ENCODE measurements at regions of chr14 and their contacts with region 1.

Region 1: GRCh38 chr14:45134051-45134958 is at the start of gene FKBP3:
- DNase-seq: peak; percentile 80 to 99 (median 94)
- ATAC-seq: peak; percentile 97
- H3K4me3 ChIP-seq: peak within 1 kb of the TSS; percentile 97
- H3K4me3 Mint-ChIP-seq: peak within 1 kb of the TSS; percentile 93 to 99 (median 96)
- H3K27ac ChIP-seq: peak within 1 kb of the TSS; percentile 89
- H3K27ac Mint-ChIP-seq: peak within 1 kb of the TSS; percentile 95 to 99 (median 98)
- H3K4me1 ChIP-seq: peaks cover 11 to 19% of the 10 kb centered on the region in 2 donors
- H3K4me1 Mint-ChIP-seq: peaks cover 21 to 70% (median 50%) of the 10 kb centered on the region in 7 donors
- H3K27me3 ChIP-seq: no peaks in the 10 kb centered on the region
- H3K27me3 Mint-ChIP-seq: no peaks in the 10 kb centered on the region
- total RNA-seq, gene FKBP3: 31.7 to 66.2 (median 55.4) TPM

Region 2: DNA sequence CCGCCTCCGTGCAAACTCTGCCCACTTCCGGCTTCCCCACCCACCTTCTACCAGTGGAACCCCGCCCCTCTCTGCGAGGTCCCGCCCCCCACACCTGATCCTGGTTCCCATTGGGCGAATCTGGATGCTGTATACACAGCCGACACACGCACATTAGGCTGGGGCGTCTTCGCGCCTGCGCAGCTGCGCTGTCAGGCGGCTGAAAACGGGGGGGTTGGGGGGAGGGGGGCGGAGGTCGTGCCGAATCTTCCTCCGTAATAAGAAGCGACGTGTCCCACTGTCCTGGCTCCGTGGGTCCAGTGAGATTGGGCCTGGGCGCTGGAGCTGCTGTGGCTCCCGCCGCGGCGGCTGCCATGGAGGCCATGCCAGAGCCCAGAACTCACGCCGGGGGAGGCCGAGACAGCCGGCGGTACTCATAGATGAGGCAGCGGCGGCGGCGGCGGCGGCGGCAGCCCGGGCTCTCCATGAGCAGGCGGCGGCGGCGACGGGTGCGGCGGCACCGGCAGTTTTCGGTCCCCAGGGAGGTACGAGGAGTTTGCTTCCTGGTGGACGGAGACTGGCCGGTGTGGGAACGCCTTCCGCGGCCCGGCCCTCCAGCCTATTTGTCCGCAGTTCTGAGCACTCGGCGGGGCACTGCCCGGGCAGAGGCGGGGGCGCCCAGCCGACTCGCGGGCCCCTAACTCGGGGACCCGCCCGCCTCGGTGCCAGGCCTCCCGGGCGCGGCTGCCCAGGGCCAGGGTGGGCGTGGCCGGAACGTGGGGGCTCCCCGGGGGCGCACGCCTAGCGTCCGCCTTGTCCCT is 237.1 kb before region 1 on chr14:
- CTCF ChIA-PET with region 1: no interaction called
- POLR2A ChIA-PET with region 1: interaction called, 14 read pairs
- intact Hi-C with region 1: loop called (anchors 1 kb)
- DNase-seq: peak; percentile 80 to 98 (median 90)
- ATAC-seq: peak; percentile 99
- H3K4me3 ChIP-seq: peak overlapping the region; percentile 68
- H3K4me3 Mint-ChIP-seq: peak overlapping the region; percentile 80 to 97 (median 94)
- H3K27ac ChIP-seq: peak overlapping the region; percentile 86
- H3K27ac Mint-ChIP-seq: peak overlapping the region; percentile 83 to 98 (median 98)
- H3K4me1 ChIP-seq: peaks cover 13 to 17% of the 10 kb centered on the region in 2 donors
- H3K4me1 Mint-ChIP-seq: peaks cover 6 to 40% (median 27%) of the 10 kb centered on the region in 7 donors
- H3K27me3 ChIP-seq: no peaks in the 10 kb centered on the region
- H3K27me3 Mint-ChIP-seq: no peaks in the 10 kb centered on the region

Region 3: GRCh38 chr14:44912041-44912869 is 222.1 kb before region 1 on chr14:
- CTCF ChIA-PET with region 1: interaction called, 3 read pairs
- POLR2A ChIA-PET with region 1: interaction called, 3 read pairs
- intact Hi-C with region 1: loop called (anchors 1 to 5 kb)
- DNase-seq: peak in 1 of 9 donors; percentile 10
- ATAC-seq: no peak
- H3K4me3 ChIP-seq: no peak overlapping the region
- H3K4me3 Mint-ChIP-seq: peak overlapping the region in 9 of 10 donors; percentile 26 to 72 (median 52)
- H3K27ac ChIP-seq: no peak overlapping the region
- H3K27ac Mint-ChIP-seq: no peak overlapping the region
- H3K4me1 ChIP-seq: no peaks in the 10 kb centered on the region
- H3K4me1 Mint-ChIP-seq: peaks cover 0 to 16% (median 12%) of the 10 kb centered on the region in 7 donors
- H3K27me3 ChIP-seq: peaks cover 9 to 16% of the 10 kb centered on the region in 2 donors
- H3K27me3 Mint-ChIP-seq: peaks cover 31 to 42% (median 38%) of the 10 kb centered on the region in 5 donors

Region 4: GRCh38 chr14:45083971-45084722 is 50.2 kb before region 1 on chr14 and contains the start of gene PRPF39:
- CTCF ChIA-PET with region 1: no interaction called
- POLR2A ChIA-PET with region 1: interaction called, 11 read pairs
- intact Hi-C with region 1: loop called (anchors 1 kb)
- DNase-seq: peak; percentile 89 to 97 (median 92)
- ATAC-seq: peak; percentile 97
- H3K4me3 ChIP-seq: peak within 1 kb of the TSS; percentile 86
- H3K4me3 Mint-ChIP-seq: peak within 1 kb of the TSS; percentile 94 to 97 (median 96)
- H3K27ac ChIP-seq: peak within 1 kb of the TSS; percentile 84
- H3K27ac Mint-ChIP-seq: peak within 1 kb of the TSS; percentile 89 to 98 (median 93)
- H3K4me1 ChIP-seq: peaks cover 21 to 40% of the 10 kb centered on the region in 2 donors
- H3K4me1 Mint-ChIP-seq: peaks cover 35 to 63% (median 50%) of the 10 kb centered on the region in 7 donors
- H3K27me3 ChIP-seq: no peaks in the 10 kb centered on the region
- H3K27me3 Mint-ChIP-seq: no peaks in the 10 kb centered on the region
- total RNA-seq, gene PRPF39: 46.2 to 81.8 (median 58.4) TPM

Region 5: GRCh38 chr14:45120096-45120495 is 14.2 kb before region 1 on chr14:
- CTCF ChIA-PET with region 1: interaction called, 3 read pairs
- POLR2A ChIA-PET with region 1: interaction called, 3 read pairs
- intact Hi-C with region 1: loop called in 1 of 2 experiments (anchors 1 kb)
- DNase-seq: no peak
- ATAC-seq: no peak
- H3K4me3 ChIP-seq: no peak overlapping the region
- H3K4me3 Mint-ChIP-seq: no peak overlapping the region
- H3K27ac ChIP-seq: no peak overlapping the region
- H3K27ac Mint-ChIP-seq: peak overlapping the region in 5 of 9 donors; percentile 2 to 69 (median 9)
- H3K4me1 ChIP-seq: no peaks in the 10 kb centered on the region
- H3K4me1 Mint-ChIP-seq: peaks cover 0 to 4% (median 0%) of the 10 kb centered on the region in 7 donors
- H3K27me3 ChIP-seq: no peaks in the 10 kb centered on the region
- H3K27me3 Mint-ChIP-seq: no peaks in the 10 kb centered on the region

Region 6: DNA sequence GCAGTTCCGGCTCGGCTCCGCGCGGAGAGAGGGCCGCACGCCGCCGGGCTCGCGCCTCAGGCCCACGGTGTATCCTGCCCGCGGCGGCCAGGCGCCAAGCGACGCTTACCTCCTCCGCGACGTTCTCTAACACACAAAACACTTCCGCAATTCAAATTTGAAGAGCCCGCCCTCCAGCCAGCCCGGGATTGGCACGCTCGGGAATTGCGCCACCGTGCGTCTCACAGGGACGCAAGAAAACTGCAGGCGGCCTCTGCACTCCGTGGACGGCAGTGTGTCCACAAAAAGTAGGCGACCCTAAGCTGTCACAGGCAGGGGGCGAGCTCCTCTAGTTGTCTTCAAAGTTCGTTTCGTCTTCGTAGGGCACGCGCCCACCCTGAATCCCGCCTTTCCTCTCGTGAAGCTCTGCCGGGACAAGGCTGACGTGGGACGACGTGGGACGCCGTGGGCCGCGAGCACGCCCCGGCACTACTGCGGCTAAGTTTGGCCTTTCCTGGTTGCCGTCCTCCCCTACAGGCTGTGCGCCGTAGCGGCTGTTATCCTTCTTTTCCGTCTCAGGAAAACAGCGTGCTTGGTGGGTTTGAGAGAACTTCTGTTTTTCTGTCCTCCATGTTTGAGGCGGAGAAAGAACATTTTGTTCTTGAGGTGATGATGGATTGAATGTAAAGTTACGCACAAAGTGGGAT is 118.9 kb after region 1 on chr14 and contains the start of gene MIS18BP1:
- CTCF ChIA-PET with region 1: no interaction called
- POLR2A ChIA-PET with region 1: interaction called, 10 read pairs
- intact Hi-C with region 1: loop called (anchors 1 kb)
- DNase-seq: peak; percentile 83 to 95 (median 91)
- ATAC-seq: peak; percentile 94
- H3K4me3 ChIP-seq: peak within 1 kb of the TSS; percentile 78
- H3K4me3 Mint-ChIP-seq: peak within 1 kb of the TSS; percentile 89 to 97 (median 95)
- H3K27ac ChIP-seq: peak within 1 kb of the TSS; percentile 75
- H3K27ac Mint-ChIP-seq: peak within 1 kb of the TSS; percentile 92 to 97 (median 95)
- H3K4me1 ChIP-seq: peaks cover 0 to 13% of the 10 kb centered on the region in 2 donors
- H3K4me1 Mint-ChIP-seq: peaks cover 5 to 31% (median 20%) of the 10 kb centered on the region in 7 donors
- H3K27me3 ChIP-seq: no peaks in the 10 kb centered on the region
- H3K27me3 Mint-ChIP-seq: peaks cover 0 to 6% (median 0%) of the 10 kb centered on the region in 5 donors
- total RNA-seq, gene MIS18BP1: 15.6 to 64.9 (median 29.4) TPM

Region 7: DNA sequence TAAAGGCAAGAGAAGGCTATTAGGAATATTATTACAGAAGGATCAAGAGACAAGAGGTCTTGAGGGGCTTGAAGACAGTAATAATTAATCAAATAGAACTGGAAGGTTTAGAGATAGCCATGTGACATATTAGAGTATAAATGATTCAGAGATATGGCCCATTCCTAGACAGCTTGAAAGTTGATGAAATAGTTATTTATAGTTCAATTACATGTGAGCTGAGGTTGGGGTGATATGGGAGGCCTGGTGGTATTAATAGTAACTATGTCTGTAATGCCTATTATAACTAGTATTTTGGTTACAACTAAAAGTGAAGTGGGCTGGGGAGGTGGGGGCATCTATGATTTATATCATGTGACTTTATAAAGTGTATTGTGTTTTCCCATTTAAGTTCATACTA is 132.8 kb after region 1 on chr14:
- CTCF ChIA-PET with region 1: no interaction called
- POLR2A ChIA-PET with region 1: no interaction called
- intact Hi-C with region 1: loop called (anchors 1 kb)
- DNase-seq: no peak
- ATAC-seq: no peak
- H3K4me3 ChIP-seq: no peak overlapping the region
- H3K4me3 Mint-ChIP-seq: no peak overlapping the region
- H3K27ac ChIP-seq: no peak overlapping the region
- H3K27ac Mint-ChIP-seq: peak overlapping the region in 1 of 9 donors; percentile 63
- H3K4me1 ChIP-seq: no peaks in the 10 kb centered on the region
- H3K4me1 Mint-ChIP-seq: no peaks in the 10 kb centered on the region
- H3K27me3 ChIP-seq: no peaks in the 10 kb centered on the region
- H3K27me3 Mint-ChIP-seq: peaks cover 4 to 19% (median 10%) of the 10 kb centered on the region in 5 donors

Measured in naive thymus-derived CD4-positive, alpha-beta T cell (primary cell).